ENCODE measurements at regions of chr1 and their contacts with region 1.

Region 1: DNA sequence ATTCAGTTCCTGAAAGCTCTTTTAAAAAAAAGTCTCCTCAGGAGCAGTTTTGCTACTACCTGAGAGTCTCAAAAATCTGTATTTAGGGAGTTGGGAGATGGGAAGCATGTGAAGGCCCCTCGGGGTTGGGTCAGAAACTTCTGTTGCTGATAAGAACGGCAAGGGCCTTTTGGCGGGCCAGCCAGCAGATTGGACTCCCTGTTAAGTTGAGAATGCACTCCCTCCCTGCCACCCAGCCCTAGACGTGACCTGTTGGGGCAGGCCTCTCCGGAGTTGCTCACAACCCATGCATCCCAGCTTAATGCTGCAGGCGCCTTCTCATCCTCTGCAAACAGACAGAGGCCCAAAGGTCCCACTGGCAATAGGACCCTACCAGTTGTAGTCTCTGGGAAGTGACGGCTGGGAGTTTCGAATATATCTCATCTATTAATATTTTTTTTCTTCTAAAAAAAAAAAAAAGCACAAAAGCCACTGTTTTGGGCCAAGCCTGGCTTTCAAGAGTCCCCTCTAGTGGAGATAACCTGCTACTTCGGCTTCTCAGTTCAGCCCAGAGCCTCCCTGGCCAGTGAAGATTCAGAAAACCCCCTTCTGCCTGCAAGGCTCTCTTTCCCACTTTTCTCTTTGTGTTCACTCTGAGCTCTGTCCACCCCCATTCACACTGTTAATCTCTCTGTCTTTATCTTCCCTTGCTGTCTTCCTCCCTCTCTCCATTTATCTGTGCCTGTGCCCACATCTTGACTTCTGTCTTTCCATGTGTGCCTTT is 5.3 kb downstream of the PLXNA2 start:
- DNase-seq: peak; percentile 93
- H3K4me3 Mint-ChIP-seq: no peak overlapping the region
- H3K27ac Mint-ChIP-seq: peak overlapping the region; percentile 81
- H3K4me1 Mint-ChIP-seq: peaks cover 60% of the 10 kb centered on the region
- H3K27me3 Mint-ChIP-seq: no peaks in the 10 kb centered on the region
- CTCF ChIP-seq: peak; percentile 98

Region 2: GRCh38 chr1:207654320-207654719 is 584.6 kb before region 1 on chr1:
- CTCF ChIA-PET with region 1: no interaction called
- POLR2A ChIA-PET with region 1: no interaction called
- intact Hi-C with region 1: no loop called
- DNase-seq: no peak
- H3K4me3 Mint-ChIP-seq: no peak overlapping the region
- H3K27ac Mint-ChIP-seq: no peak overlapping the region
- H3K4me1 Mint-ChIP-seq: no peaks in the 10 kb centered on the region
- H3K27me3 Mint-ChIP-seq: peaks cover 15% of the 10 kb centered on the region
- CTCF ChIP-seq: peak; percentile 28

Region 3: GRCh38 chr1:208085655-208086515 is 153.0 kb before region 1 on chr1:
- CTCF ChIA-PET with region 1: interaction called, 49 read pairs
- POLR2A ChIA-PET with region 1: interaction called, 8 read pairs
- intact Hi-C with region 1: no loop called
- DNase-seq: no peak
- H3K4me3 Mint-ChIP-seq: no peak overlapping the region
- H3K27ac Mint-ChIP-seq: peak overlapping the region; percentile 5
- H3K4me1 Mint-ChIP-seq: peaks cover 11% of the 10 kb centered on the region
- H3K27me3 Mint-ChIP-seq: no peaks in the 10 kb centered on the region
- CTCF ChIP-seq: no peak

Region 4: GRCh38 chr1:208161656-208162375 is 77.1 kb before region 1 on chr1:
- CTCF ChIA-PET with region 1: interaction called, 1,037 read pairs
- POLR2A ChIA-PET with region 1: interaction called, 12 read pairs
- intact Hi-C with region 1: no loop called
- DNase-seq: no peak
- H3K4me3 Mint-ChIP-seq: no peak overlapping the region
- H3K27ac Mint-ChIP-seq: no peak overlapping the region
- H3K4me1 Mint-ChIP-seq: peaks cover 41% of the 10 kb centered on the region
- H3K27me3 Mint-ChIP-seq: no peaks in the 10 kb centered on the region
- CTCF ChIP-seq: no peak

Region 5: GRCh38 chr1:208207388-208208131 is 31.3 kb before region 1 on chr1:
- CTCF ChIA-PET with region 1: interaction called, 1,037 read pairs
- POLR2A ChIA-PET with region 1: interaction called, 138 read pairs
- intact Hi-C with region 1: loop called (anchors 1 kb)
- DNase-seq: peak; percentile 100
- H3K4me3 Mint-ChIP-seq: peak overlapping the region; percentile 43
- H3K27ac Mint-ChIP-seq: peak overlapping the region; percentile 89
- H3K4me1 Mint-ChIP-seq: peaks cover 30% of the 10 kb centered on the region
- H3K27me3 Mint-ChIP-seq: no peaks in the 10 kb centered on the region
- CTCF ChIP-seq: no peak

Region 6: DNA sequence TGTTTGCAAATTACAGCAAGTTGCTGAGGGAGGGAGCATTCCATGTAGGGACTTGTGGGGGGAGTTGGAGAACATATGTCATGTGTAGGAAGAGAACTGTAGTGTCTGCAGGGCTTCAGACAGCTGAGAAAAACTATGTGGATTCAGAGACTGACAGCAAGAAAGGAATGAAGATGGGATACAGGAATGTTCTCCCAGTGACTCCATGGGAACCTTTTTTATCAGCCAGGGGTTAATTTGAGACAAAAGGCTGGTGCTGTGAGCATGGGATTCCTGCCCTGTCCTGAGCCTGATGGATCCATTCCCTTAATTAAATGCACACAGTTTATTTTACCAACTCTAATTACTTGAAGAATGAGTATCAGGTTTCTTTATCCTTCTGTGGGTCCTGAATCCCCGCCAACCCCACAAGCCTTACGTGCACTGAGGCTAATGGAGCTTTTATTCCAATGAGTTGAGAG is 31.8 kb after region 1 on chr1:
- CTCF ChIA-PET with region 1: no interaction called
- POLR2A ChIA-PET with region 1: no interaction called
- intact Hi-C with region 1: no loop called
- DNase-seq: no peak
- H3K4me3 Mint-ChIP-seq: no peak overlapping the region
- H3K27ac Mint-ChIP-seq: no peak overlapping the region
- H3K4me1 Mint-ChIP-seq: no peaks in the 10 kb centered on the region
- H3K27me3 Mint-ChIP-seq: peaks cover 87% of the 10 kb centered on the region
- CTCF ChIP-seq: no peak

Measured in MCF 10A (cell line).